Aorta (tissue), 5 donors: ENCODE measurements at regions of chr6 and their contacts with region 1.

Region 1: DNA sequence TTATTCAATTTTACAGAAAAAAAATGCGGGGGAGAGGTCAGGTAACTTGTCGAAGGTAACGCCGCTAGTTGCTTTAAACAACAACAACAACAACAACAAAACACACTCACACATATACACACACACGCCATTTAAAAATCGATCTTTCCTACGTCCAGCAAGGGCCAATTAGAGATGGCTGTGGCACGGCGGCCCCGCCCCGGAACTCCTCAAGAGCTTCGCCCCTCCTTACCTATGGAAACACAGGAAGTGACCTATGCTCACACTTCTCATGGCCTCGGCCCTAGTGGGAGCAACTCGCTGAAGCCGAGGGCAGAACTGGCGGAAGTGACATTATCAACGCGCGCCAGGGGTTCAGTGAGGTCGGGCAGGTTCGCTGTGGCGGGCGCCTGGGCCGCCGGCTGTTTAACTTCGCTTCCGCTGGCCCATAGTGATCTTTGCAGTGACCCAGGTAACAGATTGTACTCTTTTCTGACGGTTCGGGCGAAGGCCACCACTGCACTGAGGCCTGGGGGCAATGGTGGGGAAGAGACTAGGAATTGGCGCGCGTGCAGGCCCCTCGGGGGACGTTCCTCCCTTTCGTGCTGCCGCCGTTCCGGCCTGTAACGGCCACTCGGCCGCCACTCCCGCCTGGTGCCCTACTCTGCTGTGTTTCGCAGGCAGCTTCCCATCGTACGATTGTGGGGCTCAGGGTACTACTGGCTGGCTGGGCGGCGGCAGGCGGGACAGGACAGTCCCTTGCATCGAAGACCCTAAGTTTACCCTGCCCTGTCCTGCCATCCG is at the start of gene TBP:
- DNase-seq: peak; percentile 99
- ATAC-seq: peak; percentile 99
- H3K4me3 ChIP-seq: peak within 1 kb of the TSS; percentile 90 to 100
- H3K27ac ChIP-seq: peak within 1 kb of the TSS; percentile 59 to 85
- H3K4me1 ChIP-seq: peaks cover 4 to 17% of the 10 kb centered on the region in 2 donors
- H3K27me3 ChIP-seq: no peaks in the 10 kb centered on the region
- total RNA-seq, gene TBP: 11.5 to 15.3 TPM

Region 2: GRCh38 chr6:169751242-169752073 is 802.7 kb before region 1 on chr6 and contains the starts of genes DYNLT2 and ERMARD:
- intact Hi-C with region 1: loop called (anchors 1 to 10 kb)
- DNase-seq: peak; percentile 95 to 98
- ATAC-seq: peak; percentile 100
- H3K4me3 ChIP-seq: peak within 1 kb of the TSS; percentile 46 to 94
- H3K27ac ChIP-seq: peak within 1 kb of the TSS; percentile 78 to 94
- H3K4me1 ChIP-seq: peaks cover 1 to 6% of the 10 kb centered on the region in 2 donors
- H3K27me3 ChIP-seq: no peaks in the 10 kb centered on the region
- total RNA-seq, gene DYNLT2: 1.2 to 2.8 TPM
- total RNA-seq, gene ERMARD: 15.0 to 29.3 TPM

Region 3: DNA sequence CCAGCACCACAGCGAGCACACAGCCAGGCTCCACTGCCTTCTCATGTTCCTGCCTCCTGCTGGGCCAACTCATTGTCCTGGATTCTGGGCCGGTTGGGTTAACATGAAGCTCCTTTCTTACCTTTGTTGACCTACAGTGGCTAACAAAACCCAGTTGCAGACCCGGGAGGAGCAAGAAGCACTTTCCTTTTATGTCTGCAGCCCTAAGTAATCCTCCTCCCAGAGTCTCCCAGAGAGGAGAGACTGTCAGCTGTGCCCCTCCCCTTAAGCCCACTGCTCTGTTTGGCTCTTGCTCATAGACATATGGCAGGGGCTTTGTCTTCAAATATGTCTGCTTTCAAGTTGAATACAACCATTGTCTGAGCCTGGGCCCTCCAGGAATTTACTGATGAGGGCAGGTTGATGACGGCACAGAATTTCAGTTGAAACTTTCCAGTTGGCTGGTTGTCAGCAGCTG is 56.3 kb before region 1 on chr6:
- intact Hi-C with region 1: no loop called
- DNase-seq: no peak
- ATAC-seq: no peak
- H3K4me3 ChIP-seq: no peak overlapping the region
- H3K27ac ChIP-seq: no peak overlapping the region
- H3K4me1 ChIP-seq: no peaks in the 10 kb centered on the region
- H3K27me3 ChIP-seq: no peaks in the 10 kb centered on the region

Region 4: DNA sequence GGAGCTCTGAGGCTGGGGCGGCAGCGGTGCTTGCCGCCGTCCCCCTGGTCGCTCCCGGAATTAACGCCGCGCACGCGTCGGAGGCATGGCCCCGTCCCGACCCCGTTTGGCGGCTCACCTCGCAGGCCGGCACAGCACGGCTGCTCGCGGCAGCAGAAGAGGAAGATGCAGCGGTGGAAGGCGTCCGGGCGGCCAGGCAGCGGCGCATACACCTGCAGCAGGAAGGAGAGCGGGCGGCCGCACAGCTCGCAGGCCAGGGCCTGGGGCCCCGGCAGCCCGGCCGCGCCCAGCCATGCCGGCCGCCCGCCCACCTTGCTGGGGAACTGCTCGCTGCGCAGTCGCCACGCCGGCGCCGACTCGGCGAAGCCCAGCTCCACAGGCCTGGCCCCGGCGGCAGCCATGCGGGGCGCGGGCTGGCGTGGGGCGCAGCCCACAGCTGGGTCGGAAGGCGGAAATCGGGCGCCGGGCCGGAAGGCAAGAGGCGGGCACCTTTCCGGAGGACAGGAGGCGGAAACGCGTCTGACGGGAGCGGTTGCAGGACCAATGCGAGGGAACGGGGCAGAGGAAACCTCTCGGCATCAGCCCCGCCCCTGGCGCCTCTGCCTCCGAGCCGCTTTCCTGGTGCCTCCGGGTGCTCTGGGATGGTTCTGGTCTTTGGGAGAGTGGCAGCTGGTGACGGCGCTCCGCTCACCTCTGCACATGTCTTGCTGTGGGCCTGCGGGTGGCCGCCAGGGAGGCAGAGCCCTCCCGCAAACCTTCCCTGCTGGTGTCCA is 30.2 kb after region 1 on chr6 and contains the start of gene PDCD2:
- intact Hi-C with region 1: loop called in 1 of 2 experiments (anchors 1 kb)
- DNase-seq: peak; percentile 96 to 98
- ATAC-seq: peak; percentile 97
- H3K4me3 ChIP-seq: peak within 1 kb of the TSS; percentile 65 to 70
- H3K27ac ChIP-seq: peak within 1 kb of the TSS; percentile 6 to 81
- H3K4me1 ChIP-seq: no peaks in the 10 kb centered on the region
- H3K27me3 ChIP-seq: no peaks in the 10 kb centered on the region
- total RNA-seq, gene PDCD2: 36.5 to 43.9 TPM

Region 5: GRCh38 chr6:170596426-170596825 is 42.2 kb after region 1 on chr6:
- intact Hi-C with region 1: no loop called
- DNase-seq: no peak
- ATAC-seq: no peak
- H3K4me3 ChIP-seq: no peak overlapping the region
- H3K27ac ChIP-seq: no peak overlapping the region
- H3K4me1 ChIP-seq: no peaks in the 10 kb centered on the region
- H3K27me3 ChIP-seq: no peaks in the 10 kb centered on the region